ENCODE measurements at regions of chr6 and their contacts with region 1.

Region 1: GRCh38 chr6:119742188-119742803 is 392.7 kb upstream of the MAN1A1 start:
- DNase-seq: peak; percentile 66
- H3K4me3 Mint-ChIP-seq: no peak overlapping the region
- H3K27ac Mint-ChIP-seq: no peak overlapping the region
- H3K4me1 Mint-ChIP-seq: no peaks in the 10 kb centered on the region
- H3K27me3 Mint-ChIP-seq: peaks cover 2% of the 10 kb centered on the region

Region 2: DNA sequence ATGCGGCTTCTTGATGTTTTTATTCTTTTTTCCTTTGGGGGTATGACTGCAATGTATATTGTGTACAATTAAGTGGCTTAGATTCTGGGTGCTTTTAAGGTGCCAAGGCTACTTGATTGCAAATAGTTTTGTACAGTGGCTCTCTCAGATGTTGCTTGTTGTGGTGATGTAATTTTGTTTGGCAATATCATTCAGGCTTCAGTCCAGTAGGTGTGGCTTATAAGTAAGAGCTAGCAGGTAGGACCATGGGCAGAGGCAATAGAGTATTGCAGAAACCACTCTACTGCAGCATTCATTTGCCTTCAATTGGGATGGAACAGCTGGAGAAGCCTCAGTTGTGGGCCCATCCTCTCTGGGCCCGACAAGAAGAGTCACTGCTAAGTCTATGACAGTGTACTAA is 15.2 kb after region 1 on chr6:
- CTCF ChIA-PET with region 1: no interaction called
- POLR2A ChIA-PET with region 1: no interaction called
- intact Hi-C with region 1: no loop called
- DNase-seq: no peak
- H3K4me3 Mint-ChIP-seq: no peak overlapping the region
- H3K27ac Mint-ChIP-seq: no peak overlapping the region
- H3K4me1 Mint-ChIP-seq: no peaks in the 10 kb centered on the region
- H3K27me3 Mint-ChIP-seq: peaks cover 3% of the 10 kb centered on the region

Region 3: DNA sequence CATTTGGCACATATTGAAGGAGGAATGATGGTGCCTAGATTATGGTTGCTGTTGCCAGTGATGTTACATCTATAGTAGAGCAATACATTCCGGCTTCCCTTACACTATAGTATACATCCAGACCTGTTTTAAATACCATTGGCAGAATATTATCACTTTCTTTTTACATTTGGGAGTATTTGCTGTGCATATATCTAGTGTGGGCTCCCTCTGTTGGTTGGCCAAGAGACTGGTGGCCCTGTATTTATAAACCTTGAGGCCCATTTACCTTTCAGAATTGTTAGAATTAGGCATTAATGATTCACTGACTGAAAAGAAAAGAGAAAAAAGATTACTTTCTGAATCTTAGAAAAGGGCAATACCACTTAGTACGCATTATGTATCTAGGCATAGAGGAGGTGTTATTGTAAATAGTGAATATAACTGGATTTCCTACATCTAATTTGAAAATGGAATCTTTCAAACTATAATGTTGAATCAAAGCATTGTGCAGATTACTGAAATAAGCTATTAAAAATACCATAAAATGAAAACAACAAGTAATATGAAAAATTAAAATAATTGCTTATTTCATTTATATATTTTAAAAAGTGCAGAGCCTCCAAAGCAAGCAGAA is 236.1 kb after region 1 on chr6:
- CTCF ChIA-PET with region 1: no interaction called
- POLR2A ChIA-PET with region 1: no interaction called
- intact Hi-C with region 1: loop called (anchors 5 kb)
- DNase-seq: no peak
- H3K4me3 Mint-ChIP-seq: no peak overlapping the region
- H3K27ac Mint-ChIP-seq: no peak overlapping the region
- H3K4me1 Mint-ChIP-seq: no peaks in the 10 kb centered on the region
- H3K27me3 Mint-ChIP-seq: no peaks in the 10 kb centered on the region

Region 4: GRCh38 chr6:120056085-120056484 is 313.8 kb after region 1 on chr6:
- CTCF ChIA-PET with region 1: interaction called, 3 read pairs
- POLR2A ChIA-PET with region 1: no interaction called
- intact Hi-C with region 1: loop called (anchors 10 kb)
- DNase-seq: peak; percentile 18
- H3K4me3 Mint-ChIP-seq: no peak overlapping the region
- H3K27ac Mint-ChIP-seq: no peak overlapping the region
- H3K4me1 Mint-ChIP-seq: no peaks in the 10 kb centered on the region
- H3K27me3 Mint-ChIP-seq: no peaks in the 10 kb centered on the region

Region 5: DNA sequence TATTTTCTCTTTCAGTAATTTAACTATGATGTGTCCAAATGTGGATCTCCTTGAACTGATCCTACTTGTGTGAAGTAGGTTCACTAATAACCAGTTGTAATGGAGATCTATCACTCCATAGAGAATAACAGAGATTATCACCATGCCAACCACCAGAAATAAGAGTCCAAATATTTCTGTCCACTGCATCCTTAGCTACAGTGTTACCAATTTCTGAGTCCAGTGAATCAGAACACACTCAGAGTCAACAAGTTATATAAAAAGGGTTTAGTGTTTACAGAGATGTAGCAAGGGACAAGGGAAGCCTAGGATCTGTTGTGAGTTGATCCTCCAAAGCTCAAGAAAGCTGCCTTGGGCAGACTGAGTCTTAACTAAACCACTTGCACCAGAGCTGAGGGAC is 709.2 kb after region 1 on chr6:
- CTCF ChIA-PET with region 1: no interaction called
- POLR2A ChIA-PET with region 1: no interaction called
- intact Hi-C with region 1: no loop called
- DNase-seq: no peak
- H3K4me3 Mint-ChIP-seq: no peak overlapping the region
- H3K27ac Mint-ChIP-seq: no peak overlapping the region
- H3K4me1 Mint-ChIP-seq: no peaks in the 10 kb centered on the region
- H3K27me3 Mint-ChIP-seq: no peaks in the 10 kb centered on the region